Naive thymus-derived CD4-positive, alpha-beta T cell (primary cell): ENCODE measurements at regions of chr7 and their contacts with region 1.

Region 1: DNA sequence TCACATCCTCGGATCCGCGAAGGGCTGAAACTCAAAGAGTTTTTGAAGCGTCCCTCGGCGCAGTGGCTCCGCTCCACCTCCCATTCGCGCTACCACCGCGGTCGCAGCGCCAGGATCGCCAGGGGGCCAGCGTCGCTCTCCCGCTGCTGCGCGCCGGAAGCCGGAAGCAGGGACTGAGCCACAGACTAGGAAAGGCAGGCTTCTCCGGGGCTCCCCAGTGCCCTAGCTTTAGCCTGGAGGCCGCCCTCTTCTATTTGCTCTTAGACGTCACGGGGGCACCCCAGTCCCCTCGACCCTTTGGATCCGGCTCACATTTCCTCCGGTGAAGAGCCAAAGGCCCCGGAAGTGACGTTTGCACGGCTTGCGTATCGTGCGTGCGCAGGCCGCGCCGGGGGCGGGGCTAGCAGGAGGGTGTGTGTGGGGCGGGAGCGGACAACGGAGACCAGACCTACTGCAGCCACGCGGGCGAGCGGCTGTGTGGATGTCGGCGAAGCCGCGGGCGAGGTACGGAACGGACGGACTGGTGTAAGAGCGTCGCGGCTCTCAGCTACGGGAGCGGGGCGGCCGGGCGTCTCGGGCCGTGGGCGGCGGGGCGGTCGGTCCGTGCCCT is 25.5 kb downstream of the KCTD7 start:
- DNase-seq: peak; percentile 96 to 99 (median 97)
- ATAC-seq: peak; percentile 95
- H3K4me3 ChIP-seq: peak overlapping the region; percentile 94
- H3K4me3 Mint-ChIP-seq: peak overlapping the region; percentile 91 to 99 (median 98)
- H3K27ac ChIP-seq: peak overlapping the region; percentile 99
- H3K27ac Mint-ChIP-seq: peak overlapping the region; percentile 94 to 99 (median 98)
- H3K4me1 ChIP-seq: peaks cover 8% of the 10 kb centered on the region in 2 donors
- H3K4me1 Mint-ChIP-seq: peaks cover 17 to 56% (median 39%) of the 10 kb centered on the region in 7 donors
- H3K27me3 ChIP-seq: no peaks in the 10 kb centered on the region
- H3K27me3 Mint-ChIP-seq: no peaks in the 10 kb centered on the region

Region 2: DNA sequence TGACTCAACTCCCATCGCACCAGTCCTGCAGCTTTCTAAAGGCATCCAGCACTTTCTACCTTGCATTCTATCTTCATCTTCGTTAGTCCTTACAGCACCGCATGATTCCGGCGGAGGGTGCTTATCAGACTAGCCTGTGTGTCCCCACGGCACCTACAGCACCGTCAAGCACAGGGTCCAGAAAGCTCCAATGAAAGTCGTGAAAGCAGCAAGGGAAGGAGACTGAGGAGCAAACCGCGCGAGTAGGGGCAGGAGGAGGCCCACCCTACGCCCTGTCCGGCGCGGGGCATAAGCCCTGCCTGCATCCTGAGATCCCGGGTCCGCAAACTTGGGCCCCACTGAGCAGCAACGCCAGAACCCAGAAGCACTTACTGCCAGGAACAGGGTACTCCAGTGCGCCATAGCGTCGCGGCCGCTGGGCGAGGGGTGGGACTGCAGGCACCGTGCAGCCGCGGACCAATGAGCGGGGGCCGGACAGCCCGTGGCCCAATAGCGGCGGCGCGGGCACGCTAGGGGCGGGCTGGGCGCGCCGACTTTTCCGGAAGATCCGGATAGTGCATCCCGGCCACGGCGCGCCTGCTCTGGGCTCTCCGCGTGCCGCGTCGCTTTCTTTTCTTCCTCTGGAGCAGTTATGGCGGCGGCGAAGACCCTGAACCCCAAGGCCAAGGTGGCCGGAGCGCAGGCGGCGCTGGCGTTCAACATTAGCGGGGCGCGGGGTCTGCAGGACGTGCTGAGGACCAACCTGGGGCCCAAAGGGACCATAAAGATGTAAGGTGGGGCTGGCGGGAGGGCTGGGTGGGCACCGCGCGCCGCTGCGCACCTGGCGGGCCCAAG is 903.5 kb before region 1 on chr7:
- CTCF ChIA-PET with region 1: no interaction called
- POLR2A ChIA-PET with region 1: no interaction called
- intact Hi-C with region 1: loop called in 1 of 2 experiments (anchors 1 kb)
- DNase-seq: peak; percentile 76 to 91 (median 80)
- ATAC-seq: peak; percentile 99
- H3K4me3 ChIP-seq: peak overlapping the region; percentile 97
- H3K4me3 Mint-ChIP-seq: peak overlapping the region; percentile 90 to 100 (median 98)
- H3K27ac ChIP-seq: peak overlapping the region; percentile 85
- H3K27ac Mint-ChIP-seq: peak overlapping the region; percentile 75 to 95 (median 87)
- H3K4me1 ChIP-seq: peaks cover 6 to 7% of the 10 kb centered on the region in 2 donors
- H3K4me1 Mint-ChIP-seq: peaks cover 0 to 35% (median 20%) of the 10 kb centered on the region in 7 donors
- H3K27me3 ChIP-seq: no peaks in the 10 kb centered on the region
- H3K27me3 Mint-ChIP-seq: no peaks in the 10 kb centered on the region

Region 3: DNA sequence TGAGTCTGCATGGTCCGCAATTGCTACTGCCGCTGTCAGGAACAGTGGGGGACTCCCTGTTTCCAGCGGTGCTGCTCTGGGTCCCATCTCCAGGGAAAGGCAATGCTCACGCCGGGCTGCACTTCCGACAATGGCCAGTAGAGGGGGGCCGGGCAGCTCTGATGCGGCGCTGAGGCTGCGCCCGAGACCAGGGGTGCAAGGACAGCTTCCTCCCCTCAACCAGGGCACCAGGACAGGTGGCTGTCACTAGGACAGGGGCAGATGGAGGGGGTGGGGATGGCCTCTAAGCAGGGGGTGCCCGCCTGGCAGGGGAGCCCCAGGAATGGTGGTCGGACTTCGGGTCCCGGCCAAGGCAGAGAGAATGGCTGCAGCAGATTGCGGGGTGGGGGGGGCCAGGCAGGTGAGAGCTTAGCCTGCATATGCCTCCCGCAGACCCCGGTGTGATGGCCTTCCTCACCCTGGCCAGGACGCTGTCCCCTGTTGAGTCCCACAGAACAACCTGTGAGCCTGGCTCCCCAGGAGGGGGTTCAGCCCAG is 96.6 kb before region 1 on chr7:
- CTCF ChIA-PET with region 1: no interaction called
- POLR2A ChIA-PET with region 1: interaction called, 3 read pairs
- intact Hi-C with region 1: loop called in 1 of 2 experiments (anchors 1 kb)
- DNase-seq: peak; percentile 39 to 83 (median 68)
- ATAC-seq: peak; percentile 89
- H3K4me3 ChIP-seq: no peak overlapping the region
- H3K4me3 Mint-ChIP-seq: no peak overlapping the region
- H3K27ac ChIP-seq: no peak overlapping the region
- H3K27ac Mint-ChIP-seq: peak overlapping the region in 2 of 9 donors; percentile 51
- H3K4me1 ChIP-seq: peaks cover 0 to 4% of the 10 kb centered on the region in 2 donors
- H3K4me1 Mint-ChIP-seq: peaks cover 0 to 7% (median 4%) of the 10 kb centered on the region in 7 donors
- H3K27me3 ChIP-seq: no peaks in the 10 kb centered on the region
- H3K27me3 Mint-ChIP-seq: no peaks in the 10 kb centered on the region

Region 4: GRCh38 chr7:66591799-66592596 is 62.2 kb before region 1 on chr7:
- CTCF ChIA-PET with region 1: no interaction called
- POLR2A ChIA-PET with region 1: interaction called, 3 read pairs
- intact Hi-C with region 1: loop called (anchors 1 kb)
- DNase-seq: peak; percentile 65 to 90 (median 88)
- ATAC-seq: peak; percentile 98
- H3K4me3 ChIP-seq: peak overlapping the region; percentile 88
- H3K4me3 Mint-ChIP-seq: peak overlapping the region; percentile 95 to 99 (median 98)
- H3K27ac ChIP-seq: peak overlapping the region; percentile 82
- H3K27ac Mint-ChIP-seq: peak overlapping the region; percentile 88 to 99 (median 97)
- H3K4me1 ChIP-seq: peaks cover 8 to 16% of the 10 kb centered on the region in 2 donors
- H3K4me1 Mint-ChIP-seq: peaks cover 33 to 69% (median 53%) of the 10 kb centered on the region in 7 donors
- H3K27me3 ChIP-seq: no peaks in the 10 kb centered on the region
- H3K27me3 Mint-ChIP-seq: no peaks in the 10 kb centered on the region

Region 5: GRCh38 chr7:66681491-66682349 is 27.5 kb after region 1 on chr7:
- CTCF ChIA-PET with region 1: no interaction called
- POLR2A ChIA-PET with region 1: interaction called, 11 read pairs
- intact Hi-C with region 1: loop called (anchors 1 kb)
- DNase-seq: peak; percentile 92 to 97 (median 95)
- ATAC-seq: peak; percentile 98
- H3K4me3 ChIP-seq: peak overlapping the region; percentile 96
- H3K4me3 Mint-ChIP-seq: peak overlapping the region; percentile 82 to 96 (median 92)
- H3K27ac ChIP-seq: peak overlapping the region; percentile 95
- H3K27ac Mint-ChIP-seq: peak overlapping the region; percentile 86 to 98 (median 97)
- H3K4me1 ChIP-seq: peaks cover 5 to 11% of the 10 kb centered on the region in 2 donors
- H3K4me1 Mint-ChIP-seq: peaks cover 7 to 59% (median 31%) of the 10 kb centered on the region in 7 donors
- H3K27me3 ChIP-seq: no peaks in the 10 kb centered on the region
- H3K27me3 Mint-ChIP-seq: no peaks in the 10 kb centered on the region

Region 6: GRCh38 chr7:66720561-66720960 is 66.3 kb after region 1 on chr7:
- CTCF ChIA-PET with region 1: no interaction called
- POLR2A ChIA-PET with region 1: no interaction called
- intact Hi-C with region 1: no loop called
- DNase-seq: no peak
- ATAC-seq: no peak
- H3K4me3 ChIP-seq: no peak overlapping the region
- H3K4me3 Mint-ChIP-seq: no peak overlapping the region
- H3K27ac ChIP-seq: no peak overlapping the region
- H3K27ac Mint-ChIP-seq: no peak overlapping the region
- H3K4me1 ChIP-seq: no peaks in the 10 kb centered on the region
- H3K4me1 Mint-ChIP-seq: peaks cover 0 to 1% (median 0%) of the 10 kb centered on the region in 7 donors
- H3K27me3 ChIP-seq: no peaks in the 10 kb centered on the region
- H3K27me3 Mint-ChIP-seq: no peaks in the 10 kb centered on the region

Region 7: GRCh38 chr7:66740302-66740979 is 86.2 kb after region 1 on chr7 and contains the start of gene RABGEF1:
- CTCF ChIA-PET with region 1: no interaction called
- POLR2A ChIA-PET with region 1: interaction called, 4 read pairs
- intact Hi-C with region 1: loop called (anchors 1 kb)
- DNase-seq: peak; percentile 94 to 98 (median 95)
- ATAC-seq: peak; percentile 95
- H3K4me3 ChIP-seq: peak within 1 kb of the TSS; percentile 82
- H3K4me3 Mint-ChIP-seq: peak within 1 kb of the TSS; percentile 89 to 98 (median 94)
- H3K27ac ChIP-seq: peak within 1 kb of the TSS; percentile 84
- H3K27ac Mint-ChIP-seq: peak within 1 kb of the TSS; percentile 94 to 98 (median 96)
- H3K4me1 ChIP-seq: peaks cover 0 to 6% of the 10 kb centered on the region in 2 donors
- H3K4me1 Mint-ChIP-seq: peaks cover 30 to 74% (median 54%) of the 10 kb centered on the region in 7 donors
- H3K27me3 ChIP-seq: no peaks in the 10 kb centered on the region
- H3K27me3 Mint-ChIP-seq: no peaks in the 10 kb centered on the region
- total RNA-seq, gene RABGEF1: 20.7 to 35.7 (median 22.2) TPM

Region 8: GRCh38 chr7:67302113-67303039 is 648.1 kb after region 1 on chr7:
- CTCF ChIA-PET with region 1: no interaction called
- POLR2A ChIA-PET with region 1: no interaction called
- intact Hi-C with region 1: loop called in 1 of 2 experiments (anchors 10 kb)
- DNase-seq: peak; percentile 90 to 97 (median 95)
- ATAC-seq: peak; percentile 89
- H3K4me3 ChIP-seq: peak overlapping the region; percentile 74
- H3K4me3 Mint-ChIP-seq: peak overlapping the region; percentile 89 to 99 (median 96)
- H3K27ac ChIP-seq: peak overlapping the region; percentile 88
- H3K27ac Mint-ChIP-seq: peak overlapping the region; percentile 87 to 99 (median 98)
- H3K4me1 ChIP-seq: peaks cover 3 to 7% of the 10 kb centered on the region in 2 donors
- H3K4me1 Mint-ChIP-seq: peaks cover 10 to 36% (median 25%) of the 10 kb centered on the region in 7 donors
- H3K27me3 ChIP-seq: no peaks in the 10 kb centered on the region
- H3K27me3 Mint-ChIP-seq: no peaks in the 10 kb centered on the region